ENCODE measurements at regions of chr19 and their contacts with region 1.

Region 1: DNA sequence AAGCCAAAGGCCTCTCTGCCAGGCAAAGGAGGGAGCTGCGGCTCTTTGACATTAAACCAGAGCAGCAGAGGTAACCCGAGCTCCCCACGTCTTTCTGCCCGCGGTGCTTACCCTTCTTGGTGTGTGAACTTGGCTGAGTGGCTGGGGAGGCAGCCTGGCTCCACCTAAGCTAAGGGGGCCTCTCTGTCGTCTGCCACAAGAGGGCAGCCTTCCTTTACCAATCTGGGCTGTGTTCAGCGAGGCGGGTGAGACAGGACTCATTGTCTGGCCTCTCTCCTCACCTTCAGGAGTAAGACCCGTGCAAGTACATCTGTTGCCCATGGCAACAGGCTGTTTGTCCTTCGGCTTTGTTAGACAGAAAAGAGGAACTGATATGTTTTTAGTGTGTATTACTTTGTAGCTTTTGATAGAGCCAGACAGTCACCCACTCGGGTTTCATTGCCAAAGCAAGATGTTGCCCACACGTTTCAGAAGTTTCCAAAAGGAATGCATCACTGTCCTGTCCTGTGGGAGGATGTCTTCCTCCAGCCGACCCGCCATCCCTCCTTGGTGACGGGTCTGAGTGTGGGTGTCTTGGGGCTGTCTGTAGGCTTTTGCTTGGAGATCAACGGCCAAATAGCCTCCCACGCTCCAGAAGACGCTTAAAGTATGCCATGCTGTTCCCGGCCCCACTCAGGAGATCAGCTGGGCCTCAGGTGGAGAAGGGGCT is 4.6 kb downstream of the POP4 start:
- DNase-seq: no peak
- H3K4me3 ChIP-seq: no peak overlapping the region
- H3K27ac ChIP-seq: no peak overlapping the region
- H3K4me1 ChIP-seq: peaks cover 13% of the 10 kb centered on the region
- H3K27me3 ChIP-seq: no peaks in the 10 kb centered on the region
- CTCF ChIP-seq: peak; percentile 60 to 87 (median 82)
- POLR2A ChIP-seq: no peak

Region 2: DNA sequence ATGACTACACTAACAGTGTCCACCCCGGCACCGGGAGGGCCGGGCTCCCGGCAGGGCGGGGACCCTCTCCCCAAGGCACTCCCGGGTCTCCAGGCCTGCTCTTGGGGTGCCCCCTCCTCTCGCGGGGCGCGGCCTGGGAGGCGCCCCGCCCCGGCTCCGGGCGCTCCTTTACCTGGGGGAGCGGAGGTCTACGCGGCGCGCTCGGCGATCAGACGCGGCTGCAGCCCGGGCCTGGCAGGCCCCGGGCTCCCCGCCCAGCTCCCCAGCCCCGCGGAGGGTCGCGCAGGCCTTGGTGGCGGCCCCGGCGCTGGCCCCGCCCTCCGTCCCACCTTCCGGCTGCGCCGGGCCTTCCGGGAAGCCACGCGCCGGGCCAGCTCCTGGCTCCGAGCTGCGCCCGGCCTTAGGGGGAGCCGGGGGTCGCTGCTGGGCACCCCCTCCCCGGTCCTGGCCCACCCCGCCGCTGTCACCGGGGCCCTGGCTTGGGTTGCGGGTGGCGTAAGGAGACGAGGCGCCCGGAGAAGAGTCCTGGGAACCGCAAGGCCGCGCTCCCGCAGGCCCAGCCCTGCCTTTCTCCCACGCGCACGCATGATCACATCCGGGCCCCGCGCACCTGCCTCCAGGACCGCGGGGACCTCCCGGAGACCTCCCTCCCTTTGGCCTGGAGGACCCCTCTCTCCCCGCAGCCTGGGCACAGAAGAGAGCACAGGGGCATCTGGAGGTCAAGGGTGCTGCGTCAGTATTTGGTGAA is 104.4 kb after region 1 on chr19 and contains the start of gene C19orf12:
- intact Hi-C with region 1: loop called (anchors 2 kb)
- DNase-seq: no peak
- H3K4me3 ChIP-seq: peak within 1 kb of the TSS; percentile 81 to 92
- H3K27ac ChIP-seq: peak within 1 kb of the TSS; percentile 90
- H3K4me1 ChIP-seq: peaks cover 33% of the 10 kb centered on the region
- H3K27me3 ChIP-seq: no peaks in the 10 kb centered on the region
- CTCF ChIP-seq: no peak
- POLR2A ChIP-seq: peak in 1 of 2 donors; percentile 69
- total RNA-seq, gene C19orf12: 14.2 TPM

Region 3: DNA sequence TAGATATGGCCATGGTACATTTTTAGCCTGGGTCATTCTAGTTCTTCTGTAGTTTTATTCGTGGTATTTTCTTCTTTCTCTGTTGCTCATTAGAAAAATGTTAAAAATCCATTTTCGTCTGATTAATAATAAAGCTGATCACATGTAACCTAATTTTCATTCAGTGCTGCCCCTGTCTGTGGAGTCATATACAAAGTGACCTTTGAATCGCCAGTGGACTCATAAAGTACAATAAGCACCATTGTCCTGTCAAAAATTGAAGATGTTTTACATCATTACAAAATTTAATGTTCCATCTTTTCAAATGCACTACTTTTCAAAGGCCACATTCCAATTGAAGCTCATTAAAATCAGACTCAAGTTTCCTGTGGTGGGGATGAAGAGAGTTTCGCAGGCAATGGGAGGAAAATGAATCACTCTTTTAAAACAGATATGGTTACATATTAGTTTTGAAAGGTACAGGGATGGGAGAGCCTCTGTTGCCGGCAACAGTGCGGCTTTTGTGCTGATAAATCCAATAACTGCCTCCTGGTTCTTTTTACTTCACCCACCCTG is 966.9 kb after region 1 on chr19:
- intact Hi-C with region 1: no loop called
- DNase-seq: no peak
- H3K4me3 ChIP-seq: no peak overlapping the region
- H3K27ac ChIP-seq: no peak overlapping the region
- H3K4me1 ChIP-seq: no peaks in the 10 kb centered on the region
- H3K27me3 ChIP-seq: no peaks in the 10 kb centered on the region
- CTCF ChIP-seq: no peak
- POLR2A ChIP-seq: no peak